BJ (cell line): ENCODE measurements at regions of chr2 and their contacts with region 1.

Region 1: GRCh38 chr2:11411768-11412448 is 54.1 kb downstream of the E2F6 start:
- DNase-seq: no peak
- H3K4me3 ChIP-seq: no peak overlapping the region
- H3K27me3 ChIP-seq: no peaks in the 10 kb centered on the region; the same call in 1 of the 2 replicates
- CTCF ChIP-seq: peak; percentile 84

Region 2: GRCh38 chr2:11234309-11234708 is 177.6 kb before region 1 on chr2:
- CTCF ChIA-PET with region 1: interaction called, 19 read pairs
- POLR2A ChIA-PET with region 1: no interaction called
- DNase-seq: no peak
- H3K4me3 ChIP-seq: no peak overlapping the region
- H3K27me3 ChIP-seq: no peaks in the 10 kb centered on the region
- CTCF ChIP-seq: no peak

Region 3: GRCh38 chr2:11355194-11356053 is 56.5 kb before region 1 on chr2:
- CTCF ChIA-PET with region 1: no interaction called
- POLR2A ChIA-PET with region 1: interaction called, 16 read pairs
- DNase-seq: no peak
- H3K4me3 ChIP-seq: no peak overlapping the region
- H3K27me3 ChIP-seq: peaks cover 3% of the 10 kb centered on the region
- CTCF ChIP-seq: no peak